ENCODE measurements at regions of chr2 and their contacts with region 1.

Region 1: GRCh38 chr2:196277002-196277401 is 105.6 kb upstream of the STK17B start:
- DNase-seq: peak in 24 of 35 experiments; percentile 16 to 76 (median 34)
- ATAC-seq: peak; percentile 43 to 58 (median 48)
- H3K4me3 ChIP-seq: no peak overlapping the region
- H3K4me3 Mint-ChIP-seq: peak overlapping the region in 1 of 3 donors; percentile 55
- H3K27ac ChIP-seq: peak overlapping the region; percentile 57
- H3K27ac Mint-ChIP-seq: peak overlapping the region; percentile 39 to 68
- H3K4me1 ChIP-seq: peaks cover 23 to 32% of the 10 kb centered on the region in 2 experiments
- H3K4me1 Mint-ChIP-seq: peaks cover 52 to 55% (median 52%) of the 10 kb centered on the region in 3 donors
- H3K27me3 ChIP-seq: no peaks in the 10 kb centered on the region
- H3K27me3 Mint-ChIP-seq: no peaks in the 10 kb centered on the region

Region 2: GRCh38 chr2:195656859-195657633 is 620.0 kb before region 1 on chr2 and contains the start of gene SLC39A10:
- CTCF ChIA-PET with region 1: no interaction called
- POLR2A ChIA-PET with region 1: no interaction called
- DNase-seq: peak; percentile 92 to 100 (median 97)
- ATAC-seq: peak; percentile 73 to 88 (median 76)
- H3K4me3 ChIP-seq: peak within 1 kb of the TSS; percentile 73 to 89
- H3K4me3 Mint-ChIP-seq: peak within 1 kb of the TSS; percentile 87 to 99 (median 97)
- H3K27ac ChIP-seq: peak within 1 kb of the TSS; percentile 91
- H3K27ac Mint-ChIP-seq: peak within 1 kb of the TSS; percentile 100
- H3K4me1 ChIP-seq: peaks cover 12 to 14% of the 10 kb centered on the region in 2 experiments
- H3K4me1 Mint-ChIP-seq: peaks cover 26 to 49% (median 29%) of the 10 kb centered on the region in 3 donors
- H3K27me3 ChIP-seq: no peaks in the 10 kb centered on the region
- H3K27me3 Mint-ChIP-seq: peaks cover 0 to 4% of the 10 kb centered on the region in 2 donors
- total RNA-seq, gene SLC39A10: 49.8 to 81.7 (median 79.5) TPM

Region 3: DNA sequence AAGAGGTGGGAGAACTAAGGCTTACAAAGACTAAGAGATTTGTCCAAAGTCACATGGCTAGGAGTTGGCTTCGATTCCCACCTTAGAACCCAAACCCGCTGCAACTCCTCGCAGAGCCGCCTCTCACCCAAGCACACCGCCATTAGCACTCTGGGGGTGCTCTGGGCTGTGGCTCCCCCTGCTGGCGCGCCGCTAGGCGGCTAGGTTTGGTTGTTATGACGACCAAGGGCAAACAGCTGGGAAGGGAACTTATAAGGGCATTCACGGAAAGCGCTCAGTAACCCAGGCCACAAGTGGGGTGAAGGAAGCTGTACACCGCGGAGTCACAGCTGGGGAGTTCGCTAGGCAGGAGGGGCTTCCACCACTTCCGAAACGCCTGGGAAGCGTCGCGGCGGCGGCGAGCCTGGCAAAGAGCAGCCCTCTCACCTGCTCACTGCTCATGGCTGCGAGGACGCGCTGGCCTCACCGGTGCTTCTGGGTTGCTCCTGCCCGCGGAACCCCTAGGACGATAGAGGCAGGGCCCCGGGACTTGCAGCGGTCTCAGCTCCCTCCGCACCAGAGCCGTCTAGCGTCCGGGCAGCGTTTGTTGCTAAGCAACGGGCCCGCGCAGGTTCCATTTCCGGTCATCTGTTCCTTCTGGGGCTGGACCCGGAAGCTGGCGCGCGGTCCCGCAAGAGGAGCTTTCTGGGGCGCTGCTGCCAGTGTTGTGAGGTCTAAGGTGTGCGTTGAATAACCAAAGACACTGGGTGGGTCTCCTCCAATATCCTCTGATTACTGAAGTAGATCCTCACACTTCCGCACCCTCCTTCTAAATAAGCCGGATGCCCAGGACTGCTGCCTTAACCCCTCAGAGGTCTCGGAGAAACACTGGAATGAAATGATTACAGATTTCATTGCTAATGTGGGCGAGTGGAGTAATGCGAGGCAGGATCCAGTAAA is 208.5 kb before region 1 on chr2 and contains the start of gene DNAH7:
- CTCF ChIA-PET with region 1: interaction called in 1 of 2 experiments, 12 read pairs
- POLR2A ChIA-PET with region 1: no interaction called
- DNase-seq: peak; percentile 80 to 94 (median 92)
- ATAC-seq: peak; percentile 89 to 97 (median 93)
- H3K4me3 ChIP-seq: peak within 1 kb of the TSS; percentile 60 to 64
- H3K4me3 Mint-ChIP-seq: peak within 1 kb of the TSS; percentile 81 to 85 (median 82)
- H3K27ac ChIP-seq: peak within 1 kb of the TSS; percentile 51
- H3K27ac Mint-ChIP-seq: peak within 1 kb of the TSS; percentile 71 to 79
- H3K4me1 ChIP-seq: peaks cover 0 to 14% of the 10 kb centered on the region in 2 experiments
- H3K4me1 Mint-ChIP-seq: peaks cover 13 to 16% (median 14%) of the 10 kb centered on the region in 3 donors
- H3K27me3 ChIP-seq: peaks cover 0 to 4% of the 10 kb centered on the region in 2 experiments
- H3K27me3 Mint-ChIP-seq: peaks cover 0 to 4% of the 10 kb centered on the region in 2 donors
- total RNA-seq, gene DNAH7: 0.03 TPM in 1 of 5 donors, not detected in the others

Region 4: DNA sequence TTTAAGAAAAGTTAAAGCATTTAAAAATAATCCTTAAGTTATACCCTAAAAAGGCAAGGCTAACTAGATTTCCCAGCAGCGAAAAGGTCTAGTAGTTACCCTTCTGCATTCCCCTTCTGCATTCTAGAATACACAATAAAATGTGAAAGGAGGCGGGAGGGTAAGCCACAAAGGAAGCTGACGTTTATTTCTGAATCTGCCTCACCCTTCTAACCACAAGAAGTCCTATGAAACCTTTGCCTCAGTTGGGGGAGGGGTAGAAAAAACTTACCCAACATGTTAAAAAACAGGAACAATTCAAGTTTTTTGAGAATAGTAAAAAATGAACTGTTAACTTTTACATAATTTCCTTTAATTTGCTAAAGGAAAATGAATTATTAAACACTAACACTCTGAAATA is 116.9 kb before region 1 on chr2:
- CTCF ChIA-PET with region 1: interaction called in 1 of 2 experiments, 13 read pairs
- POLR2A ChIA-PET with region 1: interaction called in 1 of 2 experiments, 5 read pairs
- DNase-seq: peak in 29 of 35 experiments; percentile 36 to 91 (median 65)
- ATAC-seq: peak; percentile 50 to 72 (median 68)
- H3K4me3 ChIP-seq: peak overlapping the region in 1 of 2 donors; percentile 22
- H3K4me3 Mint-ChIP-seq: peak overlapping the region; percentile 54 to 99 (median 67)
- H3K27ac ChIP-seq: peak overlapping the region; percentile 93
- H3K27ac Mint-ChIP-seq: peak overlapping the region; percentile 82
- H3K4me1 ChIP-seq: peaks cover 36 to 67% of the 10 kb centered on the region in 2 experiments
- H3K4me1 Mint-ChIP-seq: peaks cover 72 to 85% (median 82%) of the 10 kb centered on the region in 3 donors
- H3K27me3 ChIP-seq: no peaks in the 10 kb centered on the region
- H3K27me3 Mint-ChIP-seq: no peaks in the 10 kb centered on the region

Region 5: GRCh38 chr2:196182439-196183171 is 94.4 kb before region 1 on chr2:
- CTCF ChIA-PET with region 1: interaction called, 4 to 19 read pairs
- POLR2A ChIA-PET with region 1: interaction called, 3 to 4 read pairs
- DNase-seq: peak in 1 of 35 experiments; percentile 63
- ATAC-seq: peak in 3 of 4 experiments; percentile 21 to 33 (median 30)
- H3K4me3 ChIP-seq: no peak overlapping the region
- H3K4me3 Mint-ChIP-seq: peak overlapping the region; percentile 14 to 75 (median 64)
- H3K27ac ChIP-seq: peak overlapping the region; percentile 94
- H3K27ac Mint-ChIP-seq: peak overlapping the region; percentile 93 to 100
- H3K4me1 ChIP-seq: peaks cover 65 to 66% of the 10 kb centered on the region in 2 experiments
- H3K4me1 Mint-ChIP-seq: peaks cover 86 to 91% (median 88%) of the 10 kb centered on the region in 3 donors
- H3K27me3 ChIP-seq: no peaks in the 10 kb centered on the region
- H3K27me3 Mint-ChIP-seq: no peaks in the 10 kb centered on the region

Region 6: GRCh38 chr2:196205881-196206435 is 71.0 kb before region 1 on chr2:
- CTCF ChIA-PET with region 1: interaction called in 1 of 2 experiments, 13 read pairs
- POLR2A ChIA-PET with region 1: interaction called in 1 of 2 experiments, 3 read pairs
- DNase-seq: no peak
- ATAC-seq: no peak
- H3K4me3 ChIP-seq: no peak overlapping the region
- H3K4me3 Mint-ChIP-seq: no peak overlapping the region
- H3K27ac ChIP-seq: no peak overlapping the region
- H3K27ac Mint-ChIP-seq: peak overlapping the region in 1 of 2 donors; percentile 36
- H3K4me1 ChIP-seq: peaks cover 27% of the 10 kb centered on the region in 2 experiments
- H3K4me1 Mint-ChIP-seq: peaks cover 50 to 66% (median 61%) of the 10 kb centered on the region in 3 donors
- H3K27me3 ChIP-seq: no peaks in the 10 kb centered on the region
- H3K27me3 Mint-ChIP-seq: no peaks in the 10 kb centered on the region

Region 7: GRCh38 chr2:196233021-196233804 is 43.8 kb before region 1 on chr2:
- CTCF ChIA-PET with region 1: interaction called, 13 to 24 read pairs
- POLR2A ChIA-PET with region 1: interaction called in 1 of 2 experiments, 8 read pairs
- DNase-seq: no peak
- ATAC-seq: peak in 3 of 4 experiments; percentile 1 to 27 (median 18)
- H3K4me3 ChIP-seq: no peak overlapping the region
- H3K4me3 Mint-ChIP-seq: peak overlapping the region in 1 of 3 donors; percentile 49
- H3K27ac ChIP-seq: peak overlapping the region; percentile 69
- H3K27ac Mint-ChIP-seq: peak overlapping the region; percentile 91 to 97
- H3K4me1 ChIP-seq: peaks cover 60 to 61% of the 10 kb centered on the region in 2 experiments
- H3K4me1 Mint-ChIP-seq: peaks cover 92 to 93% (median 92%) of the 10 kb centered on the region in 3 donors
- H3K27me3 ChIP-seq: no peaks in the 10 kb centered on the region
- H3K27me3 Mint-ChIP-seq: no peaks in the 10 kb centered on the region

Region 8: DNA sequence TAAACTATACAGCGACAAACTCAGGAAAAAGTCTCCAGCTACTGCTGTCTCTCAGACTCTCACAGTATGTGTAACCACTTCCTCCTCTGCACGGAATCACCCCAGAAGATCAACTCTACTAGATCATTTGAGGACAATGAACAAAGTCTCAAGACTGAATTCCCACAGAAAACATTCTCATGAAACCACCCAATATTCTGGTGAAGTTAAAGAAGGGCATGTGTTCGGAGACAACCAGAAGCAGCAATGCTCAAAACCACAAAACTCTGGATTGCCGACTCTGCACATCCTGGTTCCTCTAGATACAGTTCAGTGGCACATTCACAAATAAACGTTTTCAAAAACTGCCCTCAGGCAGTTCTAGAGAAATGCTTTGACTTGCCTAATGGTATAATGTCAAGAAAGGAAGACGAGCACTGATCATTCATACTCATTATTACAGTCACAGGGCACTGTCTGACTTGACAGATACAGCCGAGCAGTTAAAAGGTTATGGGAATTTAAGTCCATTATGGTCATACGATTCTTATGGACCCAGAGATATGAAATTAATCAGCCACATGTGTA is 13.7 kb before region 1 on chr2:
- CTCF ChIA-PET with region 1: interaction called, 3 to 13 read pairs
- POLR2A ChIA-PET with region 1: interaction called, 3 to 5 read pairs
- DNase-seq: peak in 30 of 35 experiments; percentile 3 to 84 (median 48)
- ATAC-seq: peak; percentile 83 to 89 (median 88)
- H3K4me3 ChIP-seq: peak overlapping the region in 1 of 2 donors; percentile 38
- H3K4me3 Mint-ChIP-seq: peak overlapping the region; percentile 61 to 73 (median 71)
- H3K27ac ChIP-seq: peak overlapping the region; percentile 80
- H3K27ac Mint-ChIP-seq: peak overlapping the region; percentile 98
- H3K4me1 ChIP-seq: peaks cover 43 to 80% of the 10 kb centered on the region in 2 experiments
- H3K4me1 Mint-ChIP-seq: peaks cover 81 to 86% (median 82%) of the 10 kb centered on the region in 3 donors
- H3K27me3 ChIP-seq: no peaks in the 10 kb centered on the region
- H3K27me3 Mint-ChIP-seq: no peaks in the 10 kb centered on the region

Region 9: GRCh38 chr2:196314780-196315179 is 37.8 kb after region 1 on chr2:
- CTCF ChIA-PET with region 1: no interaction called
- POLR2A ChIA-PET with region 1: no interaction called
- DNase-seq: no peak
- ATAC-seq: no peak
- H3K4me3 ChIP-seq: no peak overlapping the region
- H3K4me3 Mint-ChIP-seq: no peak overlapping the region
- H3K27ac ChIP-seq: no peak overlapping the region
- H3K27ac Mint-ChIP-seq: no peak overlapping the region
- H3K4me1 ChIP-seq: no peaks in the 10 kb centered on the region
- H3K4me1 Mint-ChIP-seq: no peaks in the 10 kb centered on the region
- H3K27me3 ChIP-seq: no peaks in the 10 kb centered on the region
- H3K27me3 Mint-ChIP-seq: no peaks in the 10 kb centered on the region